ENCODE measurements at regions of chr4 and their contacts with region 1.

Region 1: DNA sequence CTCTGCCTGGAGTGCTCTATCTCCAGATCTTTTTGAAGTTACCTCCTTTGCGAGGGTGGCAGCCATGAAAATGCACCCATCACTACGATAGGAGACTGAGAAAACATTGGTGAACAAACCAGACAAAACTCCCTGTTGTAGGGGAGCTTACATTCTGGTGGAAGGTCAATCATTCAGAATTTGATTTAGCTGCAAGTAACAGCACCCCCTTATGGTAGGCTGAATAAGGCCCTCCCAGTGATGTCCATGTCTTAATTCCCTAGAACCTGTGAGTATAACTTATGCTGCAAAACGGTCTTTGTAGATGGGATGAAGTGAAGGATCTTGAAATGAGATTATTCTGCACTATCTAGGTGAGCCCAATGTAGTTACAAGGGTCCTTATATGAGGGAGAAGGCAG is 5.6 kb upstream of the TEC start:
- DNase-seq: peak; percentile 42
- ATAC-seq: peak; percentile 80
- H3K4me3 ChIP-seq: no peak overlapping the region
- H3K27ac ChIP-seq: no peak overlapping the region
- H3K4me1 ChIP-seq: peaks cover 12% of the 10 kb centered on the region
- H3K27me3 ChIP-seq: no peaks in the 10 kb centered on the region
- CTCF ChIP-seq: peak; percentile 78 to 85 (median 81); a peak in 5 of 6 replicates
- EP300 ChIP-seq: no peak
- POLR2A ChIP-seq: no peak
- RAD21 ChIP-seq: peak; percentile 73

Region 2: GRCh38 chr4:48109413-48110263 is 165.6 kb before region 1 on chr4:
- CTCF ChIA-PET with region 1: interaction called, 20 read pairs
- POLR2A ChIA-PET with region 1: no interaction called
- RAD21 ChIA-PET with region 1: interaction called, 3 read pairs
- SMC1A ChIA-PET with region 1: interaction called, 4 read pairs
- in situ Hi-C with region 1: no loop called
- intact Hi-C with region 1: no loop called
- DNase-seq: no peak
- ATAC-seq: peak; percentile 90
- H3K4me3 ChIP-seq: no peak overlapping the region
- H3K27ac ChIP-seq: no peak overlapping the region
- H3K4me1 ChIP-seq: no peaks in the 10 kb centered on the region
- H3K27me3 ChIP-seq: no peaks in the 10 kb centered on the region
- CTCF ChIP-seq: peak; percentile 57 to 64 (median 60)
- EP300 ChIP-seq: no peak
- POLR2A ChIP-seq: no peak
- RAD21 ChIP-seq: peak; percentile 74

Region 3: GRCh38 chr4:48141048-48141447 is 134.2 kb before region 1 on chr4:
- CTCF ChIA-PET with region 1: interaction called, 21 read pairs
- POLR2A ChIA-PET with region 1: interaction called, 4 read pairs
- RAD21 ChIA-PET with region 1: interaction called, 19 read pairs
- SMC1A ChIA-PET with region 1: interaction called, 28 read pairs
- in situ Hi-C with region 1: no loop called
- intact Hi-C with region 1: no loop called
- DNase-seq: no peak
- ATAC-seq: peak; percentile 75
- H3K4me3 ChIP-seq: no peak overlapping the region
- H3K27ac ChIP-seq: no peak overlapping the region
- H3K4me1 ChIP-seq: peaks cover 17% of the 10 kb centered on the region
- H3K27me3 ChIP-seq: no peaks in the 10 kb centered on the region
- CTCF ChIP-seq: peak; percentile 21 to 55 (median 49); a peak in 4 of 6 replicates
- EP300 ChIP-seq: no peak
- POLR2A ChIP-seq: no peak
- RAD21 ChIP-seq: peak; percentile 37; the same call in 1 of the 2 replicates

Region 4: DNA sequence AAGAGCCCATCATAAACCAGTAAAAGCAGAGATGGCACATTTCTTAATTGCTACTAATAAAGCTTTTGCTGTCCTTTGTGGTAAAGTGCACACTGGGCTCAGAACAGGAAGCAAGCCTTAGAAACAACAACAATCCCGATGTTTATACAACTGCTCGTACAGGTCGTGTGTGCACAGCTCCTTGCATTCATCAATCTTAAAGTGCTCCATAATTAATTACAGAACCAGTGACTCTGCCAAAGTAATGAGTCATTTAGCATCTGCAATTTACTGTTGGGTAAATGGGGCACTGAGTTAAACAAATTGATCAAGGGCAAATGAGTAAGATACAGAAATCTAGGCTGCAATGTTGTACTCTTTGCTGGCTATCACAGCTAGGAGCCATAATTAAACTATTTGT is 79.9 kb before region 1 on chr4:
- CTCF ChIA-PET with region 1: interaction called, 17 read pairs
- POLR2A ChIA-PET with region 1: interaction called, 7 read pairs
- RAD21 ChIA-PET with region 1: interaction called, 9 read pairs
- SMC1A ChIA-PET with region 1: interaction called, 20 read pairs
- in situ Hi-C with region 1: no loop called
- intact Hi-C with region 1: no loop called
- DNase-seq: no peak
- ATAC-seq: peak; percentile 48
- H3K4me3 ChIP-seq: peak overlapping the region; percentile 81
- H3K27ac ChIP-seq: peak overlapping the region; percentile 86
- H3K4me1 ChIP-seq: peaks cover 46% of the 10 kb centered on the region
- H3K27me3 ChIP-seq: no peaks in the 10 kb centered on the region
- CTCF ChIP-seq: no peak
- EP300 ChIP-seq: peak in 1 of 2 experiments; percentile 20; a peak in 1 of 4 replicates
- POLR2A ChIP-seq: no peak
- RAD21 ChIP-seq: no peak

Region 5: DNA sequence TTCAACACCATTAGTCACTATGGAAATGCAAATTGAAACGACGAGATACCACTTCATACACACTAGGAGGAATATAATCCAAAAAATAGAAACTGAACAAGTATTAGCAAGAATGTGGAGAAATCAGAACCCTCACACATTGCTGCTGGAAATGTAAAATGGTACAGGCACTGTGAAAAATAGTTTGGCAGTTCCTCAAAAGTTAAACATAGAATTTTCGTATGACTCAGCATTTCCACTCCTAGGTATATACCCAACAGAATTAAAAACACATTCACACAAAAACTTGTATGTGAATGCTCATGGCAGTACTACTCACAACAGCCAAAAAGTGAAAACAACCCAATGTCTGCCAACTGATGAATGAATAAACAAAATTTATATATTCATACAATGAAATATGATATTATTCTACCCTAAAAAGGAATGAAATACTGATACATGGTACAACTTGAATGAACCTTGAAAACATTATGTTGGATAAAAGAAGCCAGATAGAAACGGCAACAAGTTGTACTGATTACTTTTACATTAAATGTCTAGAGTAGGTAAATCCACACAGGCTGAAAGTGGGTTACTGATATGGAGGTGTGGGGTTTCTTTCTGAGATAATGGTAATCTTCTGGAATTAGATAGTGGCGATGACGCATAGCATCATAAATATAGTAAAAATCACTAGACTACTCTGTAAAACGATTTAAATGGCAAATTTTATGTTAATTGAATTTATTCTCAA is 27.9 kb before region 1 on chr4:
- CTCF ChIA-PET with region 1: interaction called, 3 read pairs
- POLR2A ChIA-PET with region 1: interaction called, 4 read pairs
- RAD21 ChIA-PET with region 1: interaction called, 4 read pairs
- SMC1A ChIA-PET with region 1: interaction called, 12 read pairs
- in situ Hi-C with region 1: no loop called
- intact Hi-C with region 1: no loop called
- DNase-seq: peak; percentile 51
- ATAC-seq: peak; percentile 74
- H3K4me3 ChIP-seq: 0 out of 2 replicates have a peak overlapping the region, but pooled peaks have one; percentile 25
- H3K27ac ChIP-seq: peak overlapping the region; percentile 79
- H3K4me1 ChIP-seq: peaks cover 28% of the 10 kb centered on the region
- H3K27me3 ChIP-seq: no peaks in the 10 kb centered on the region
- CTCF ChIP-seq: no peak
- EP300 ChIP-seq: no peak
- POLR2A ChIP-seq: no peak
- RAD21 ChIP-seq: no peak